ENCODE measurements at regions of chr18 and their contacts with region 1.

Region 1: DNA sequence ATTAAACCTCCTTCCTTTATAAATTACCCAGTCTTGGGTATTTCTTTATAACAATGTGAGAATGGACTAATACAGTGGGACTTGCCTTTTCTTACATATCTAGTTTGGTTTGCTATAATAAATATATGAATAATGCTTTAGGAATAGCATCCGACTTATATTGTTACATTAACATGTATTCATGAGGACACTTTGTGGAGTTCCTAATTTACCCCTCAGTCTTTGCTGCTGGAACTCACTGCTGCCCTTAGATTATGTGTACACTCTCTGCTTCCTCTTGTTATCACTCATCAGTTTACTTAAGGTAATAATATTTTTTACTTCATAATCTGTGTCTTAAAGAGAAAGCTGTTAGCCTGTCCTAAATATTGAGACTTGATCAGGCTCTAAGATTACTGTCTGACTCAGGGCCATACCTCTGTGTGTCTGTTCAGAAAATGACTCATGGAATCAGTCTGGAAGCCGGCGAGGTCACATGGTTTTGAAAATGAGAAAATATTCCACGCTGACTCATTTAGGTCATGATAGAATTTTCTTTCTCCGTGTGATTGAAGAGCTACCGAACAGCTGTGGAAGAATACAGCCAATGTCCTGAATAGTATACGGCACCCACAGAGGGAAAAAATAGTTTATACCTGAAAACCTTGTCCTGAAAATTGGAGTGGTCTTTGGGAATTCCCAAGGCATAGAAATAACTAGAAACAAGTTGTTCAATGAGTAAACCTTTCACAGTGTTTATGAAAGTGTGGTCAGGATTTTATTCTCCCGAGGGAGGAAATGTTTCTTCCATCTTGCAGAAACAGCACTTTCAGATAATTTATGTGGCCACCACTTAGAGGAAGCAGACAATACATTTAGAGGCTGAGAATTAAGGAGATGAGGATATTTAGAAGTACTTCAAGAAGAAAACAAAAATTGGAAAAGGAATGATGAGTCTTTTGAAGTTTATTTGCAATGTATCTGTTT is 156.4 kb downstream of the DSEL start:
- DNase-seq: peak in 1 of 2 donors; percentile 86
- H3K4me3 ChIP-seq: peak overlapping the region; percentile 32 to 55
- H3K27ac ChIP-seq: peak overlapping the region; percentile 70 to 82
- H3K4me1 ChIP-seq: peaks cover 0 to 3% of the 10 kb centered on the region in 2 donors
- H3K27me3 ChIP-seq: no peaks in the 10 kb centered on the region
- CTCF ChIP-seq: no peak

Region 2: GRCh38 chr18:67265464-67266245 is 94.5 kb before region 1 on chr18:
- intact Hi-C with region 1: loop called (anchors 2 kb)
- DNase-seq: no peak
- H3K4me3 ChIP-seq: no peak overlapping the region
- H3K27ac ChIP-seq: peak overlapping the region; percentile 74 to 79
- H3K4me1 ChIP-seq: peaks cover 0 to 20% of the 10 kb centered on the region in 2 donors
- H3K27me3 ChIP-seq: no peaks in the 10 kb centered on the region
- CTCF ChIP-seq: no peak

Region 3: GRCh38 chr18:67417864-67418523 is 57.8 kb after region 1 on chr18:
- intact Hi-C with region 1: loop called (anchors 5 kb)
- DNase-seq: no peak
- H3K4me3 ChIP-seq: peak overlapping the region; percentile 17 to 29
- H3K27ac ChIP-seq: peak overlapping the region; percentile 46 to 64
- H3K4me1 ChIP-seq: no peaks in the 10 kb centered on the region
- H3K27me3 ChIP-seq: no peaks in the 10 kb centered on the region
- CTCF ChIP-seq: no peak

Measured in ascending aorta (tissue), 2 donors.